Endothelial cell of umbilical vein (primary cell): ENCODE measurements at regions of chr13 and their contacts with region 1.

Region 1: DNA sequence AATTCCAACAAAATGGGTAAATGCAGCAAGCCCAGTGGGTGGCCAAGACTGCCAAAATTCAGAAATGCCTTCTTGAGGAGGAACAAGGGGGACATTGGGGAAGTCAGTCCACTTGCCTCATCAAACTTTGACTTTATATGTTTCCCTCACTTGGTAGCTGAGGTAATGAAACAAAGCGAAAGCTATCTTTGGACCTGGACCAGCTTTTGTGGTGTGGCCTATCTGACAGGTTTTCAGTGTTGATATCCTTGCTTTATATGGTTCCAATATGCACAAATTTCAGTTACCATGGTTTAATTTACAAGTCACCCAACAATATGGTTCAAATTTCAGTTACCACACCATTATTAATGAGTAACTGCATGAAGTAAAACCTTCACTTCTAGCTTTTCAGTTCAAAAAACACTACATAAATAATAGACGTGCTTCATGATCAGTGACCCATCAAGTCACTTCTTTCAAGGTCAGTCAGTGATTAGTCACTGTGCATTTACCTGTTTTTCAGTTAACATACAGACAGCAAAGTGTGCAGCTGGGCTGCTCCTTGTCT is 17.7 kb upstream of the POU4F1 start:
- DNase-seq: no peak
- H3K4me3 ChIP-seq: no peak overlapping the region
- H3K27ac ChIP-seq: no peak overlapping the region
- H3K4me1 ChIP-seq: no peaks in the 10 kb centered on the region
- H3K27me3 ChIP-seq: no peaks in the 10 kb centered on the region
- CTCF ChIP-seq: no peak
- POLR2A ChIP-seq: no peak

Region 2: DNA sequence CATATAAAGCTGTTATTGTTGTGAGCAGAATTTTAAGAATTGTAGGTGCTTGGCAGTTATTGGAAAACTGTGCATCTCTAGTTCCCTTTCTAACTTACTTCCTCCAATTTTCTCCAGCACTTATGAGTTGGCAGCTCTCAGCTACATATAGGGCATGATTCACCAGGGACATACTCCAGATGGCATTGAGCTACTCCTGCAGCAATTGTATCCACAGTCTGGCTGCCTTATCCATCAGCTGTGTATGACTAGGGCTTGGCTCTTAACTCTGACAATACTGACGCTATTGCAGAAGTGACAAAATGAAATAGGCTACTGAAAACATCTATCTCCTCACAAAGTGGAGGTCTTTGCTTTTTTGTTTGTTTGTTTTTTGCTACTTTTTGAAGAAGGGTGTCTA is 294.4 kb before region 1 on chr13:
- CTCF ChIA-PET with region 1: no interaction called
- POLR2A ChIA-PET with region 1: no interaction called
- dilution Hi-C with region 1: no loop called
- intact Hi-C with region 1: no loop called
- DNase-seq: peak; percentile 24
- H3K4me3 ChIP-seq: no peak overlapping the region
- H3K27ac ChIP-seq: no peak overlapping the region
- H3K4me1 ChIP-seq: peaks cover 6% of the 10 kb centered on the region
- H3K27me3 ChIP-seq: no peaks in the 10 kb centered on the region
- CTCF ChIP-seq: no peak
- POLR2A ChIP-seq: no peak

Region 3: GRCh38 chr13:78609464-78610205 is 11.4 kb before region 1 on chr13:
- CTCF ChIA-PET with region 1: interaction called, 4 read pairs
- POLR2A ChIA-PET with region 1: no interaction called
- dilution Hi-C with region 1: no loop called
- intact Hi-C with region 1: loop called (anchors 1 kb)
- DNase-seq: peak; percentile 30
- H3K4me3 ChIP-seq: peak overlapping the region; percentile 43 to 79 (median 64)
- H3K27ac ChIP-seq: no peak overlapping the region
- H3K4me1 ChIP-seq: peaks cover 7% of the 10 kb centered on the region
- H3K27me3 ChIP-seq: peaks cover 27 to 50% of the 10 kb centered on the region in 2 experiments
- CTCF ChIP-seq: no peak
- POLR2A ChIP-seq: no peak

Region 4: GRCh38 chr13:78881751-78882150 is 260.7 kb after region 1 on chr13:
- CTCF ChIA-PET with region 1: no interaction called
- POLR2A ChIA-PET with region 1: no interaction called
- dilution Hi-C with region 1: no loop called
- intact Hi-C with region 1: no loop called
- DNase-seq: no peak
- H3K4me3 ChIP-seq: no peak overlapping the region
- H3K27ac ChIP-seq: no peak overlapping the region
- H3K4me1 ChIP-seq: no peaks in the 10 kb centered on the region
- H3K27me3 ChIP-seq: no peaks in the 10 kb centered on the region
- CTCF ChIP-seq: no peak
- POLR2A ChIP-seq: no peak